ENCODE measurements at regions of chr11 and their contacts with region 1.

Region 1: GRCh38 chr11:1652771-1653540 is 23.4 kb downstream of the KRTAP5-5 start:
- DNase-seq: peak; percentile 51 to 89
- ATAC-seq: peak; percentile 79 to 93
- H3K4me3 ChIP-seq: no peak overlapping the region
- H3K27ac ChIP-seq: peak overlapping the region in 1 of 2 experiments; percentile 26; a peak in 2 of 6 replicates
- H3K4me1 ChIP-seq: no peaks in the 10 kb centered on the region; the same call in 2 of the 3 replicates
- CTCF ChIP-seq: peak; percentile 93
- EP300 ChIP-seq: no peak
- POLR2A ChIP-seq: no peak
- RAD21 ChIP-seq: peak; percentile 94 to 97

Region 2: GRCh38 chr11:1628506-1629325 is 24.2 kb before region 1 on chr11:
- CTCF ChIA-PET with region 1: interaction called, 12 read pairs
- POLR2A ChIA-PET with region 1: no interaction called
- DNase-seq: peak; percentile 44 to 83
- ATAC-seq: peak; percentile 84 to 97
- H3K4me3 ChIP-seq: no peak overlapping the region
- H3K27ac ChIP-seq: no peak overlapping the region
- H3K4me1 ChIP-seq: no peaks in the 10 kb centered on the region
- CTCF ChIP-seq: peak; percentile 82
- EP300 ChIP-seq: no peak
- POLR2A ChIP-seq: no peak
- RAD21 ChIP-seq: peak; percentile 52 to 68

Region 3: DNA sequence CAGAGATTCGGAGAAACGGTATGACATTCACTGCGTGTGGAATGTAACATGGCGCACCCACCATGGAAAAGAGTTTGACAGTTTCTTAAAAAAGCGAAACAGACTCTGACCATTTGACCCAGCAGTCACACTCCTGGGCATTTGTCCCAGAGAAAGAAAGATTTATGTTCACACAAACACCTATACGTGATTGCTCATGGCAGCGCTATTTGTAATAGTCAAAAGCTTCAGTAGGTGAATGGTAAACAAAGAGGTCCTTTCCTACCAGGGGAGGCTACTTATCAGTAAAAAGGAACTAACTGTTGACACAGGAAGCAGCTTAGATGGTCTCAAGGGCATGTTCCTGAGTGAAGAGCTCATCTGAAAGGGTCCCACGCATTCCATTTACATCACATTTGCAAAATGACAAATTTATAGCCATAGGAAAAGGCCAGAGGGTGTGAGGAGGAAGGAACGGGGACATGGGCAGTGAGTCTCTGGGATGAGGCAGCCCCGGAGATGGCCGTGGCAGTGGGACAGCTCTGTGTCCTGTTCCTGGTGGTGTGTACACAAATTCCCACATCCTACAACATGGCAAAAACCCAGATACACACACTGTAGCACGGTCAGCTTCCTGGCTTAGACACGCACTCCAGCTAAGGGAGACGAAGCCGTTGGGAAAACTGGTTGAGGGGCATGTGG is 29.4 kb after region 1 on chr11:
- CTCF ChIA-PET with region 1: interaction called, 41 read pairs
- POLR2A ChIA-PET with region 1: no interaction called
- DNase-seq: no peak
- ATAC-seq: no peak
- H3K4me3 ChIP-seq: no peak overlapping the region
- H3K27ac ChIP-seq: no peak overlapping the region
- H3K4me1 ChIP-seq: no peaks in the 10 kb centered on the region
- CTCF ChIP-seq: no peak
- EP300 ChIP-seq: no peak
- POLR2A ChIP-seq: no peak
- RAD21 ChIP-seq: no peak

Region 4: GRCh38 chr11:1845561-1846452 is 192.9 kb after region 1 on chr11:
- CTCF ChIA-PET with region 1: interaction called, 18 read pairs
- POLR2A ChIA-PET with region 1: no interaction called
- DNase-seq: no peak
- ATAC-seq: no peak
- H3K4me3 ChIP-seq: no peak overlapping the region
- H3K27ac ChIP-seq: no peak overlapping the region
- H3K4me1 ChIP-seq: peaks cover 7% of the 10 kb centered on the region
- CTCF ChIP-seq: no peak
- EP300 ChIP-seq: no peak
- POLR2A ChIP-seq: no peak
- RAD21 ChIP-seq: no peak

Region 5: GRCh38 chr11:1917671-1918516 is 264.9 kb after region 1 on chr11:
- CTCF ChIA-PET with region 1: interaction called, 11 read pairs
- POLR2A ChIA-PET with region 1: no interaction called
- DNase-seq: no peak
- ATAC-seq: peak; percentile 52 to 76; a peak in 5 of 6 replicates
- H3K4me3 ChIP-seq: no peak overlapping the region
- H3K27ac ChIP-seq: no peak overlapping the region
- H3K4me1 ChIP-seq: no peaks in the 10 kb centered on the region
- CTCF ChIP-seq: no peak
- EP300 ChIP-seq: no peak
- POLR2A ChIP-seq: no peak
- RAD21 ChIP-seq: no peak

Region 6: GRCh38 chr11:1994121-1994520 is 341.2 kb after region 1 on chr11:
- CTCF ChIA-PET with region 1: interaction called, 15 read pairs
- POLR2A ChIA-PET with region 1: no interaction called
- DNase-seq: no peak
- ATAC-seq: no peak
- H3K4me3 ChIP-seq: no peak overlapping the region
- H3K27ac ChIP-seq: no peak overlapping the region
- H3K4me1 ChIP-seq: no peaks in the 10 kb centered on the region
- CTCF ChIP-seq: no peak
- EP300 ChIP-seq: no peak
- POLR2A ChIP-seq: no peak
- RAD21 ChIP-seq: no peak

Region 7: DNA sequence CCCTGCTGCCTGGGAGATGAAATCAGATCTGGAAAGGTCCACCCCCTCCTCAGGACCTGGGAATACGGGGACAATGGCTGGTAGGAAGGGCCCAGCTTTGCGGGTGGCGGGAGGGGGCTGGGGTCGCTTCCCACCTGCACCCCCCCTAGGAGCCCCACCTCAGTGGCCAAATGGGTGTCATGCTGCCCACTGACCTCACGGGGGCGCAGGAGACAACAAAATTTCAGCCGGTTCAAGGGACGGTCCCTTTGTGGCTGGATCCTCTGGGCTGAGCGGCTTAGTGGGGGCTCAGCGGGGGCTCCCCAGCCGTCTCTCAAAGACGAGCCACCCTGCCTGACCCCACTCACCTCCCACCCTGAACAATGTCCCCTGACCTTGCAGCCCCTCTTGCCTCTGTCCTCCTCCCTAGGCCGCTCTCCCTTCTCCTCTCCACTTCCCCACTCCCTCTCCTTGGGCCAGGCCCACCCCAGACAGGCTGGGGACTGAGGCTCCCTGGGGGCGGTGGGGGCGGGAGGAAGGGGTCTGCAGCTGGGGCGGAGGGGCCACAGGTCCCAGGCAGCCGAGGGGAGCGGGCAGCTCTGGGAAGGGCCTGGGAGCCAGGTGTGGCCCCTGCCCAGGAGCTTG is 384.0 kb after region 1 on chr11:
- CTCF ChIA-PET with region 1: interaction called, 18 read pairs
- POLR2A ChIA-PET with region 1: no interaction called
- DNase-seq: no peak
- ATAC-seq: peak; percentile 44 to 85; a peak in 3 of 6 replicates
- H3K4me3 ChIP-seq: no peak overlapping the region
- H3K27ac ChIP-seq: no peak overlapping the region
- H3K4me1 ChIP-seq: no peaks in the 10 kb centered on the region
- CTCF ChIP-seq: no peak
- EP300 ChIP-seq: no peak
- POLR2A ChIP-seq: no peak
- RAD21 ChIP-seq: no peak

Measured in A549 (cell line).